ENCODE measurements at regions of chr19 and their contacts with region 1.

Region 1: GRCh38 chr19:19488875-19489690 is 26.3 kb downstream of the TSSK6 start:
- DNase-seq: peak in 5 of 6 donors; percentile 60 to 83 (median 73)
- ATAC-seq: peak; percentile 39 to 76 (median 70)
- H3K4me3 ChIP-seq: no peak overlapping the region
- H3K27ac ChIP-seq: peak overlapping the region; percentile 59 to 73 (median 68)
- H3K4me1 ChIP-seq: peaks cover 20 to 34% (median 31%) of the 10 kb centered on the region in 3 donors
- H3K27me3 ChIP-seq: no peaks in the 10 kb centered on the region
- CTCF ChIP-seq: no peak

Region 2: GRCh38 chr19:19354932-19355331 is 134.2 kb before region 1 on chr19:
- intact Hi-C with region 1: loop called in 1 of 3 experiments (anchors 5 kb)
- DNase-seq: peak in 2 of 6 donors; percentile 15 to 57
- ATAC-seq: no peak
- H3K4me3 ChIP-seq: no peak overlapping the region
- H3K27ac ChIP-seq: no peak overlapping the region
- H3K4me1 ChIP-seq: no peaks in the 10 kb centered on the region
- H3K27me3 ChIP-seq: no peaks in the 10 kb centered on the region
- CTCF ChIP-seq: no peak

Region 3: GRCh38 chr19:19372656-19373416 is 116.2 kb before region 1 on chr19:
- intact Hi-C with region 1: loop called in 2 of 3 experiments (anchors 5 to 10 kb)
- DNase-seq: peak in 2 of 6 donors; percentile 34 to 60
- ATAC-seq: peak in 3 of 4 donors; percentile 67 to 83 (median 79)
- H3K4me3 ChIP-seq: no peak overlapping the region
- H3K27ac ChIP-seq: peak overlapping the region in 2 of 4 donors; percentile 44 to 62
- H3K4me1 ChIP-seq: peaks cover 0 to 7% (median 5%) of the 10 kb centered on the region in 3 donors
- H3K27me3 ChIP-seq: no peaks in the 10 kb centered on the region
- CTCF ChIP-seq: no peak